H1 (cell line): ENCODE measurements at regions of chr19 and their contacts with region 1.

Region 1: DNA sequence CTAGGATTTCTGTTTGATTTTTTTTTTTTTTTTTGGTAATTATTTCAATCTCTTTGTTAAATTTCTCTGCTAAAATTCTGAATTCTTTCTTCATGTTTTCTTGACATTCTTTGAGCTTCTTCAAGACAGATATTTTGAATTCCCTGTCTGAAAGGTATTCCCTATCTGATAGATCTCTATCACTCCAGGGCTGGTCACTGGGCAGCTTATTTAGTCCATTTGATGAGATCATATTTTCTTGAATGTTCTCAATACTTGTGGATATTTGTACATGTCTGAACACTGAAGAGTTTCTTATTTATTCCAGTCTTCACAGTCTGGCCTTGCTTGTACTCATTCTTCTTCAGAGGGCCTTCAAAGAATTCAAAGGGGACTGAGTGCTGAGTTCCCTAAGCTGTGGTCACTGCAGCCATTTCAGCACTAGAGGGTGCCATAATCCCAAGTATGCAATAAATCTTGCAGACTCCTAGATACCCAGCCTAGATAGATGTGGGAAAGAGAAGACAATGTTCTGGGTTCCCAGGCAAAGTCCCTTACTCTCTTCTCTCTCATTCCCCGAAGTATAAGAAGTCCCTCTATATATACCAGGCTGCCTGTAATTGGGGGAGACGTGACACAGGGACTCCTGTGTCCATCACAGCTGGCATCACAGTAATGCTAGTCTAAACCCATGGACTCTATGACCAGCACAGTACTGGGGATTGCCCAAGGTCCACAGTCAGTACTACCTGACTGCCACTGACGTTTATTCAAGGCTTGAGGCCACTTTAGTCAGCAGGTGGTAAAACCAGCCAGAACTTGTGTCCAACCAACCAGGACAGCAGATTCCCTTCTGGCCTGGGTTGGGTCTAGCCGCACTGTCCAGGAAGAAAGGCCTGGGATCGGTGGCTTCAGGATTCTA is 8.8 kb upstream of the VN1R1 start:
- DNase-seq: peak in 1 of 2 experiments; percentile 56
- H3K4me3 ChIP-seq: no peak overlapping the region
- H3K27ac ChIP-seq: no peak overlapping the region
- H3K4me1 ChIP-seq: no peaks in the 10 kb centered on the region
- H3K27me3 ChIP-seq: no peaks in the 10 kb centered on the region
- CTCF ChIP-seq: peak in 2 of 3 experiments; percentile 57 to 74; a peak in 3 of 4 replicates
- EP300 ChIP-seq: no peak
- POLR2A ChIP-seq: no peak
- RAD21 ChIP-seq: peak; percentile 83 to 84

Region 2: GRCh38 chr19:57477191-57478008 is 11.7 kb after region 1 on chr19 and contains the start of gene ZNF772:
- CTCF ChIA-PET with region 1: interaction called, 10 read pairs
- POLR2A ChIA-PET with region 1: interaction called, 6 read pairs
- DNase-seq: peak; percentile 84 to 93
- H3K4me3 ChIP-seq: peak within 1 kb of the TSS; percentile 89 to 97 (median 96)
- H3K27ac ChIP-seq: peak within 1 kb of the TSS; percentile 85
- H3K4me1 ChIP-seq: no peaks in the 10 kb centered on the region
- H3K27me3 ChIP-seq: peaks cover 0 to 1% (median 0%) of the 10 kb centered on the region in 4 experiments; a peak in 2 of 7 replicates
- CTCF ChIP-seq: peak; percentile 62 to 91 (median 80)
- EP300 ChIP-seq: no peak
- POLR2A ChIP-seq: peak in 1 of 2 experiments; percentile 68; a peak in 1 of 3 replicates
- RAD21 ChIP-seq: peak; percentile 37 to 48; a peak in 3 of 4 replicates
- total RNA-seq, gene ZNF772: 15.2 and 15.7 TPM in 2 replicates